ENCODE measurements at regions of chr22 and their contacts with region 1.

Region 1: GRCh38 chr22:42202669-42203068 is 67.8 kb downstream of the TCF20 start:
- DNase-seq: peak; percentile 48
- ATAC-seq: peak; percentile 83
- H3K4me3 Mint-ChIP-seq: peak overlapping the region; percentile 79
- H3K27ac Mint-ChIP-seq: peak overlapping the region; percentile 73
- H3K4me1 Mint-ChIP-seq: peaks cover 27% of the 10 kb centered on the region
- H3K27me3 Mint-ChIP-seq: no peaks in the 10 kb centered on the region

Region 2: GRCh38 chr22:42151924-42152635 is 50.6 kb before region 1 on chr22:
- POLR2A ChIA-PET with region 1: no interaction called
- DNase-seq: no peak
- ATAC-seq: no peak
- H3K4me3 Mint-ChIP-seq: no peak overlapping the region
- H3K27ac Mint-ChIP-seq: peak overlapping the region; percentile 34
- H3K4me1 Mint-ChIP-seq: peaks cover 2% of the 10 kb centered on the region
- H3K27me3 Mint-ChIP-seq: no peaks in the 10 kb centered on the region

Region 3: DNA sequence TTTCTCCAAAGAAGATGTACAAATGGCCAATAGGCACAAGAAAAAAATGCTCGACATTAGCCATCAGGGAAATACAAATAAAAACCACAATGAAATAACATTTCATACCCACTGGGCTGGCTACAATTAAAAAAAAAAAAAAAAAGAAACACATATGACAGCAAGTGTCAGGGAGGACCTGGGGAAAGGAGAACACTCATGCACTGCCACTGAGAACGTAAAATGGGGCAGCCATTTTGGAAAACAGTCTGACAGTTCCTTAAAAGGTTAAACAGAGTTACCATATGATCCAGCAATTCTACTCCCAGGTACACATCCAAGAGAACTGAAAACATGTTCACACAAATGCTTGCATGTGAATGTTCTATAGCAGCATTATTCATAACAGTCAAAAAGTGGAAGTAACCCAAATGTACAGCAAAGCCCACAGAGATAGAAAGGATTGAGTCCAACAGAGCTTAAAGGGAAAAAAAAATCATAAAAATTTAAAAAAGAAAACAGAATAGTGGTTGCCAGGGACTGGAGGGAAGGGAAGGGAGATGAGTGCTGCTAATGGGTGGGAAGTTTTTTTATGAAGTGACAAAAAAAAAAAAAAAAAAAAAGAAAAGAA is 23.7 kb before region 1 on chr22:
- POLR2A ChIA-PET with region 1: interaction called, 13 read pairs
- DNase-seq: no peak
- ATAC-seq: no peak
- H3K4me3 Mint-ChIP-seq: peak overlapping the region; percentile 39
- H3K27ac Mint-ChIP-seq: peak overlapping the region; percentile 83
- H3K4me1 Mint-ChIP-seq: peaks cover 54% of the 10 kb centered on the region
- H3K27me3 Mint-ChIP-seq: no peaks in the 10 kb centered on the region